K562 (cell line): ENCODE measurements at regions of chr10 and their contacts with region 1.

Region 1: DNA sequence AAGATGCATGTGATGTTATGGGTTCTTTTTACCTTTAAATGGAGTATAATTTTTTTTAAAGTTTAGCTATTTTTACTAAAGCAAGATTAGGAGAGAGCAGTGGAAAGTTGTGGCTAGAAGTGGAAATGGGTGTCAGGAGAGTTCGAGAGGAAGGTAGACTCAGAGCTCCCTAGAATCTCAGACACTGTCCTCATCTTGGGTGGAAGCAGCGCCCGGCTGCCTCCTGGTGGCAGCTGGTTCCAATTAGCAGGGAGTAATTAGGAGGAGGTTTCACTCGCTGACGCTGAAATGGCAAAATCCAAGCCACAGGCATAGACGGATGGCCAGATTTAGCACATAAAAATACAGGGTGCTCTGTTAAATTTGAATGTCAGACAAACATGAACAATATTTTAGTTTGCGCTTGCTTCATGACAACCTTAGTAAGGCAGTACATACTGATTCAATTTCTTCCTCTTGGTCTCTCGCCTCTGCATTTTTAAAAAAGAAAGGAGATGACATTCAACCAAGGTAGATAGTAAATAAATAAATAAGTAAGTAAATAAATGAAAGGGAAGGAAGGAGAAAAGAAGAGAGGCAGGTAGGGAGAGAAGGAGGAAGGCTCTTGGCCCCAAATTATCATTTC is 58.5 kb downstream of the LGI1 start:
- DNase-seq: peak; percentile 11 to 41 (median 18)
- ATAC-seq: peak; percentile 84
- H3K4me3 ChIP-seq: no peak overlapping the region
- H3K27ac ChIP-seq: no peak overlapping the region
- H3K4me1 ChIP-seq: no peaks in the 10 kb centered on the region
- H3K27me3 ChIP-seq: no peaks in the 10 kb centered on the region; a peak in 1 of 5 replicates
- CTCF ChIP-seq: peak; percentile 55 to 60 (median 58)
- EP300 ChIP-seq: no peak
- POLR2A ChIP-seq: no peak
- RAD21 ChIP-seq: peak; percentile 51 to 62

Region 2: GRCh38 chr10:93376372-93377293 is 439.6 kb before region 1 on chr10:
- CTCF ChIA-PET with region 1: interaction called, 4 read pairs
- POLR2A ChIA-PET with region 1: no interaction called
- in situ Hi-C with region 1: no loop called
- intact Hi-C with region 1: loop called (anchors 5 kb)
- DNase-seq: peak; percentile 51 to 55 (median 54)
- ATAC-seq: peak; percentile 82
- H3K4me3 ChIP-seq: no peak overlapping the region
- H3K27ac ChIP-seq: no peak overlapping the region
- H3K4me1 ChIP-seq: no peaks in the 10 kb centered on the region
- H3K27me3 ChIP-seq: peaks cover 0 to 12% of the 10 kb centered on the region in 2 experiments; a peak in 1 of 5 replicates
- CTCF ChIP-seq: peak; percentile 69 to 78 (median 71)
- EP300 ChIP-seq: no peak
- POLR2A ChIP-seq: no peak
- RAD21 ChIP-seq: peak; percentile 90 to 94

Region 3: GRCh38 chr10:93554760-93555432 is 261.3 kb before region 1 on chr10:
- CTCF ChIA-PET with region 1: no interaction called
- POLR2A ChIA-PET with region 1: interaction called, 3 read pairs
- in situ Hi-C with region 1: no loop called
- intact Hi-C with region 1: loop called (anchors 10 kb)
- DNase-seq: peak; percentile 66 to 80 (median 70)
- ATAC-seq: peak; percentile 97
- H3K4me3 ChIP-seq: no peak overlapping the region
- H3K27ac ChIP-seq: peak overlapping the region; percentile 42; the same call in 2 of the 3 replicates
- H3K4me1 ChIP-seq: peaks cover 0 to 11% of the 10 kb centered on the region in 2 experiments; a peak in 3 of 5 replicates
- H3K27me3 ChIP-seq: peaks cover 0 to 8% of the 10 kb centered on the region in 2 experiments; a peak in 1 of 5 replicates
- CTCF ChIP-seq: peak; percentile 61 to 81 (median 63)
- EP300 ChIP-seq: no peak
- POLR2A ChIP-seq: no peak
- RAD21 ChIP-seq: peak in 1 of 2 experiments; percentile 67; a peak in 3 of 4 replicates

Region 4: DNA sequence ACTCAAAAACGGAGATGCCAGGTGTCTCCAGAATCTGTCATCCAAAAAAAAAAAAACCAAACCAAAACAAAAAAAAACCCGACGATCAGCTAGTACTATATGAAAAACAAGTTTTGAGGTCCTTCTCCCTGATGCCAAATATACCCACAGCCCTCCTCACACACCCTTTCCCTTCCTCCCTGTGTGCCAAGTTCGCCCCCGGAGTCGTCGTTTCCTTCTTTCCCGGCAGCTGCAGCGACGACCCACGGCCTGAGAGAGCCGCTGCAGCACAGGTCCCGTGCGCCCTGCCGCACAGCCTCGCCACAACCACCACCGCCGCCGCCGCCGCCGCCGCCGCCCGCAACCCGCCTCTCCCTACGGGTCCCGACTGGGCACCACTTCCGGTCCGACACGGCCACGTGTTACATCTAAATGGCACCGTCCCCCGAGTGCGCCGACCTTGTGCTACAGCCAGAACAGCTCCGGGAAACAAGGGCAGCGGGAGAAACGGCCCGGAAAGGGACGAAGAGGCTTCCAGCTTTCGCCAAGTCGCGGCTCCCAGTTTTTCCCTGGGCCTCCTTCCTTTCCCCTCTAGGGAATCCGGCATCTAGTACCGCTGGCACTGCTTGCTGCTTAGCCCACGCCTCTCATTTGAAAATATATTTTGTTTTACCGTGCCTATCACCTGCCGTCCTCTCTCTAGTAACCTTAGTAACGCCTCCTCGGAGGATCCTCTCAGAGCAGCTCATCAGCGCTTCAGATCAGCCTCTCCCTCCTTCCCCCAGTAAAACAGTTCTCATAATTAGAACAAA is 113.8 kb before region 1 on chr10 and contains the start of gene FRA10AC1:
- CTCF ChIA-PET with region 1: interaction called, 3 read pairs
- POLR2A ChIA-PET with region 1: no interaction called
- in situ Hi-C with region 1: no loop called
- intact Hi-C with region 1: loop called (anchors 2 kb)
- DNase-seq: peak; percentile 80 to 88 (median 80)
- ATAC-seq: peak; percentile 99
- H3K4me3 ChIP-seq: peak within 1 kb of the TSS; percentile 64
- H3K27ac ChIP-seq: peak within 1 kb of the TSS; percentile 67
- H3K4me1 ChIP-seq: peaks cover 0 to 2% of the 10 kb centered on the region in 2 experiments; a peak in 1 of 5 replicates
- H3K27me3 ChIP-seq: no peaks in the 10 kb centered on the region
- CTCF ChIP-seq: peak; percentile 33 to 66 (median 51); a peak in 4 of 6 replicates
- EP300 ChIP-seq: peak; percentile 45; the same call in 1 of the 2 replicates
- POLR2A ChIP-seq: peak; percentile 77
- RAD21 ChIP-seq: peak; percentile 53 to 66
- polyA plus RNA-seq, gene FRA10AC1: 4.4 to 4.5 TPM

Region 5: DNA sequence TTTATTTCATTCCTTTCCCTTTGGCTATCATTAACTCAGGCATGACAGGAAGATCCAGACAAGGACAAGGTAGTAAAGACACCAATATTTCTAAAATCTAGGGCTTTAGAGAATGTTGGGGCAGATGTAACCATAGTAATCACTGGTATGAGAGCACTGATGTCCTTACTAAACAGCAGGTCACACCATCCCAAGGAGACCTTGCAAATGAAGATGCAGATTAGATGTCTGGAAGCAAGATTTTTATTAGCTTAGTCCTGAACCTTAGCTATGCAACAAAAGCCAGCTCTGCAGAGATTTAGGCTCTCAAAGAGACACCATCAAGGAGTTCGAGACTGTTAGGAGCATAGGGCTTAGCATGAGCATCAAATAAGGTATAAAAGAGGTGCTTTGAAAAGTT is 90.2 kb before region 1 on chr10:
- CTCF ChIA-PET with region 1: no interaction called
- POLR2A ChIA-PET with region 1: no interaction called
- in situ Hi-C with region 1: no loop called
- intact Hi-C with region 1: no loop called
- DNase-seq: no peak
- ATAC-seq: no peak
- H3K4me3 ChIP-seq: no peak overlapping the region
- H3K27ac ChIP-seq: no peak overlapping the region
- H3K4me1 ChIP-seq: no peaks in the 10 kb centered on the region
- H3K27me3 ChIP-seq: no peaks in the 10 kb centered on the region
- CTCF ChIP-seq: no peak
- EP300 ChIP-seq: no peak
- POLR2A ChIP-seq: no peak
- RAD21 ChIP-seq: no peak

Region 6: DNA sequence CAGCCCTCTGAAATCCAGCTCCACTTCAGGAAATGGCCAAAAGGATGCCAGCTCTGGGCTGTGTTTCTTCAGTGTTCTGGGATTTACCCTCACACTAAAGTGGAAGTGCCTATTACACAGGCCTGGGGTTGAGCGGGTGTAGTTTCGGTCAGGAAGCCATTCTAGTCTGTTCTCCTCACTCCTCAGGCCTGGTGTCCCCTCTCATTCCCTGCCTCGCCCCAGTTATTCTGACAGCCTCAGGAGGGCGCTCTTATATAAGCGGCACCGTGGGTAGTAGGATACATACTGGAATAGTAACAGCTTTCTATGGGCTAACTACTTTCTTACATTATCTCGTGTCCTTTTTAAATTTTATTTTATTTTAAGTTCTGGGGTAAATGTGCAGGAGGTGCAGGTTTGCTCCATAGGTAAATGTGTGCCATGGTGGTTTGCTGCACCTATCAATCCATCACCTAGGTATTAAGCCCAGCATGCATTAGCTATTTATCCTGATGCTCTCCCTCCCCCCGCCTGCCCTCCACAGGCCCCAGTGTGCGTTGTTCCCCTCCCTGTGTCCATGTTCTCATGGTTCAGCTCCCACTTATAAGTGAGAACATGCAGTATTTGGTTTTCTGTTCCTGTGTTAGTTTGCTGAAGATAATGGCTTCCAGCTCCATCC is 70.7 kb before region 1 on chr10:
- CTCF ChIA-PET with region 1: no interaction called
- POLR2A ChIA-PET with region 1: no interaction called
- in situ Hi-C with region 1: no loop called
- intact Hi-C with region 1: loop called (anchors 1 kb)
- DNase-seq: peak; percentile 11 to 38 (median 21)
- ATAC-seq: peak; percentile 88
- H3K4me3 ChIP-seq: no peak overlapping the region
- H3K27ac ChIP-seq: no peak overlapping the region
- H3K4me1 ChIP-seq: no peaks in the 10 kb centered on the region; a peak in 1 of 5 replicates
- H3K27me3 ChIP-seq: peaks cover 0 to 3% of the 10 kb centered on the region in 2 experiments; a peak in 3 of 5 replicates
- CTCF ChIP-seq: peak; percentile 47 to 58 (median 55)
- EP300 ChIP-seq: no peak
- POLR2A ChIP-seq: no peak
- RAD21 ChIP-seq: peak in 1 of 2 experiments; percentile 50; a peak in 2 of 4 replicates

Region 7: GRCh38 chr10:93921338-93921737 is 105.1 kb after region 1 on chr10:
- CTCF ChIA-PET with region 1: interaction called, 5 read pairs
- POLR2A ChIA-PET with region 1: no interaction called
- in situ Hi-C with region 1: no loop called
- intact Hi-C with region 1: loop called (anchors 10 kb)
- DNase-seq: peak in 3 of 4 experiments; percentile 11 to 34 (median 12)
- ATAC-seq: 0 out of 3 replicates have a peak, but pooled peaks have one; percentile 43
- H3K4me3 ChIP-seq: no peak overlapping the region
- H3K27ac ChIP-seq: no peak overlapping the region
- H3K4me1 ChIP-seq: no peaks in the 10 kb centered on the region
- H3K27me3 ChIP-seq: no peaks in the 10 kb centered on the region
- CTCF ChIP-seq: peak; percentile 36 to 57 (median 55)
- EP300 ChIP-seq: no peak
- POLR2A ChIP-seq: no peak
- RAD21 ChIP-seq: peak in 1 of 2 experiments; percentile 45; a peak in 3 of 4 replicates

Region 8: DNA sequence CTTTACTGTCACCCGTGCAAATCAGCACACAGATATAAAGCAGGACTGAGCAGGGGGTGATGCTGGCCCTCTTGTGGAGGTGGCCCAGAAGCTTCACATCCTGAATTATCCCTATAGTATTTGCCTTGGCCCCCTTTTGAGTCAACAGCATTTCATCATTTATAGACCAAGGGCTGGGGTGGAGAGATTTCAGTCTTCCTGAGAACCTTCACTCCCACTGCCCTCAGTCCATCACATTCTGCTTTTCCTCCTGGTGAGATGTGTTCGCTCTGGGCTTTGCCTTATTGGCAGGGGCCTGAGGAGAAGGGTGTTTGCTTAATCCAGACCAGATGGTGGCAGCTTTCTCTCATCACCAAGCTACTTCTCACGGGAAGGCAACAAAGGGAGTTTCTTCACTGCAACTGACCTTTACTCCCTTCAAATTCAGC is 498.8 kb after region 1 on chr10:
- CTCF ChIA-PET with region 1: interaction called, 4 read pairs
- POLR2A ChIA-PET with region 1: no interaction called
- in situ Hi-C with region 1: no loop called
- intact Hi-C with region 1: loop called (anchors 10 kb)
- DNase-seq: no peak
- ATAC-seq: peak; percentile 64; the same call in 2 of the 3 replicates
- H3K4me3 ChIP-seq: no peak overlapping the region
- H3K27ac ChIP-seq: no peak overlapping the region
- H3K4me1 ChIP-seq: no peaks in the 10 kb centered on the region
- H3K27me3 ChIP-seq: no peaks in the 10 kb centered on the region
- CTCF ChIP-seq: no peak
- EP300 ChIP-seq: no peak
- POLR2A ChIP-seq: no peak
- RAD21 ChIP-seq: no peak

Region 9: DNA sequence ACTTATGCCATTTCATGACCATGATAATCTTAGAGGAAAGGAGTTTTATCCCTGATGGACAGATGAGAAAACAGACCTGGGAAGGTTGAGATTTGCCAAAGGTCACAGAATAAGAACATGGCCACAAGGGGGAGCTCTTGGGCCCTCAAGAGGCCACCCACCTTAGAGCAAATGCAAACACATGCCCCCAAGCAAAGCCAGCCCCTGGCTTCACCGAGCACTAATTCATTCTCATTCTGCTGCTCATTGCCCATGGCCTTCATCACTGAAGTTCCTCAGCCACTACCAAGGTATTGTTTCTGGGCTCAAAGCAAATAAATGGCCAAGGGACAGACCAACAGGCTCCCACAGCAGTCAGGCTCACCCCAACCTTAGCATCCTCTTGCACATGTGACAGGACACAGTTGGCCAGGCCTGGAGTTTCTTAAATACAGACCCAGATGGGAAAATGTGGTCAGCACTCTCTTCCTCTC is 1430.4 kb after region 1 on chr10:
- CTCF ChIA-PET with region 1: no interaction called
- POLR2A ChIA-PET with region 1: no interaction called
- in situ Hi-C with region 1: no loop called
- intact Hi-C with region 1: no loop called
- DNase-seq: peak; percentile 59 to 81 (median 62)
- ATAC-seq: peak; percentile 86
- H3K4me3 ChIP-seq: no peak overlapping the region
- H3K27ac ChIP-seq: no peak overlapping the region
- H3K4me1 ChIP-seq: 0 out of 5 replicates have a peak, but pooled peaks cover 0 to 3% of the 10 kb centered on the region in 2 experiments
- H3K27me3 ChIP-seq: no peaks in the 10 kb centered on the region
- CTCF ChIP-seq: peak; percentile 61 to 77 (median 72)
- EP300 ChIP-seq: no peak
- POLR2A ChIP-seq: no peak
- RAD21 ChIP-seq: peak; percentile 73 to 84